Gastrocnemius medialis (tissue), 4 donors: ENCODE measurements at regions of chr1 and their contacts with region 1.

Region 1: GRCh38 chr1:169485544-169486278 is at the start of gene SLC19A2:
- DNase-seq: peak; percentile 100
- ATAC-seq: peak; percentile 72 to 75
- H3K4me3 ChIP-seq: peak within 1 kb of the TSS; percentile 75 to 94 (median 83)
- H3K27ac ChIP-seq: peak within 1 kb of the TSS; percentile 96 to 99 (median 98)
- H3K4me1 ChIP-seq: peaks cover 33 to 47% of the 10 kb centered on the region in 2 donors
- H3K27me3 ChIP-seq: no peaks in the 10 kb centered on the region
- CTCF ChIP-seq: peak in 2 of 5 experiments; percentile 36 to 44
- POLR2A ChIP-seq: peak; percentile 91 to 99
- total RNA-seq, gene SLC19A2: 93.3 to 176 (median 99.8) TPM

Region 2: GRCh38 chr1:167721617-167722151 is 1764.0 kb before region 1 on chr1 and contains the start of gene MPZL1:
- in situ Hi-C with region 1: no loop called
- intact Hi-C with region 1: loop called (anchors 5 kb)
- DNase-seq: peak; percentile 95
- ATAC-seq: peak; percentile 96 to 97
- H3K4me3 ChIP-seq: peak within 1 kb of the TSS; percentile 73 to 93 (median 90)
- H3K27ac ChIP-seq: peak within 1 kb of the TSS; percentile 79 to 92 (median 87)
- H3K4me1 ChIP-seq: peaks cover 23 to 34% of the 10 kb centered on the region in 2 donors
- H3K27me3 ChIP-seq: no peaks in the 10 kb centered on the region
- CTCF ChIP-seq: no peak
- POLR2A ChIP-seq: peak; percentile 76 to 80
- total RNA-seq, gene MPZL1: 9.2 to 15.7 (median 11.7) TPM

Region 3: DNA sequence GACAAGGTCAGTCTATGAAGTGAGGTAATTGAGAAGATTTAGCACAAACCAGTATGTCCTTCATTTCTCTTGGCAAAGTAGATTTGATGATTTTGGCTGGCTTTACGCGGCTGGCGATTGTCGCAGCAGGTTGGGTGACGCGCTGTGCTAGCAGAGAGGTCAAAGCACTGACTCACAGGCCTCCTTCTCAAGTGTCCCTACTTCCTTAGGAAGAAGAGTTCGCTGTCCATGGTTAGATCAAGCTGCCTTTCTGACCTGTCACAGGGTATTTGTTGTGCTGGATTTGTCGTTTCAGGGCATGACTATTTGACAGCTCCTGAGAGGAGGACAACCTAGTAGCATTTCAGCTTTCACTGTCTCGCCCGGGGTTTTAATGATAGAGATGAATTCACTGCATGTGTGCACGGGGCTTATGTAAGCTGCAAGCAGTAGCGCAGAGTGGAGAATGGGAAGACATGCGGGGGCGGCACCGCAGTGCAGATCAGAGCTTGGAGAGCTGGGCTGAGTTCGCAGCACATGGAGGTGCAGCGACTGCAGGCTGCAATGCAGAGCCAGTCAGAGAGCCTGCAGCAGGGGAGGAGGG is 876.5 kb before region 1 on chr1:
- in situ Hi-C with region 1: loop called in 2 of 4 experiments (anchors 10 to 25 kb)
- intact Hi-C with region 1: loop called (anchors 2 kb)
- DNase-seq: peak; percentile 86 to 91
- ATAC-seq: peak; percentile 79 to 80
- H3K4me3 ChIP-seq: peak overlapping the region; percentile 35 to 54 (median 46)
- H3K27ac ChIP-seq: peak overlapping the region; percentile 96 to 100 (median 96)
- H3K4me1 ChIP-seq: peaks cover 72 to 79% of the 10 kb centered on the region in 2 donors
- H3K27me3 ChIP-seq: no peaks in the 10 kb centered on the region
- CTCF ChIP-seq: no peak
- POLR2A ChIP-seq: peak; percentile 51 to 87

Region 4: DNA sequence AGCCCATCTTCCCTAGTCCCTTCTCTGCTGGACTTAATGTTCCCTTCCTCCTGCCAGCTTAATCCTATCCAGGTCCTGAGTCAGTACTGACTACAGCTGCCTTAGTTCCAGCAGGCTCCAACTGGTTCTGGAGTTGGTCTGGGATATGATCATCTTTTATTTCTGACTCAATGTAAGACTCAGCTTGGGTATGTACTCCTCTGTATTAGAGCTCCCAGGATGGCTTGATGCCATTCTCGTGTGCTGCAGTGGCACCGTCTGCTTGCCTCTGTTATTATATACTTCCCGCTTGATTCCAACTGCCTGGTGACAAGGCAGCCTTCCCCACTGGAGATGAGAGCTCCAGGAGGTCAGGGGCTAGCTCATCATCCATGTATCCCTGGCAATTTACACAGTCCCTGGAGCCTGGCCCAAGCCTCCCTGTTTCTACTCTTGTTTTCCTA is 592.3 kb before region 1 on chr1:
- in situ Hi-C with region 1: loop called in 1 of 4 experiments (anchors 10 kb)
- intact Hi-C with region 1: loop called (anchors 10 kb)
- DNase-seq: peak; percentile 74 to 88
- ATAC-seq: peak; percentile 98 to 99
- H3K4me3 ChIP-seq: peak overlapping the region in 2 of 4 donors; percentile 11 to 19
- H3K27ac ChIP-seq: peak overlapping the region; percentile 83 to 95 (median 88)
- H3K4me1 ChIP-seq: peaks cover 8 to 21% of the 10 kb centered on the region in 2 donors
- H3K27me3 ChIP-seq: no peaks in the 10 kb centered on the region
- CTCF ChIP-seq: no peak
- POLR2A ChIP-seq: peak; percentile 11 to 47

Region 5: GRCh38 chr1:169295425-169295824 is 190.3 kb before region 1 on chr1:
- in situ Hi-C with region 1: no loop called
- intact Hi-C with region 1: no loop called
- DNase-seq: no peak
- ATAC-seq: no peak
- H3K4me3 ChIP-seq: no peak overlapping the region
- H3K27ac ChIP-seq: no peak overlapping the region
- H3K4me1 ChIP-seq: no peaks in the 10 kb centered on the region
- H3K27me3 ChIP-seq: no peaks in the 10 kb centered on the region
- CTCF ChIP-seq: no peak
- POLR2A ChIP-seq: no peak

Region 6: GRCh38 chr1:169367486-169368405 is 118.0 kb before region 1 on chr1 and contains the starts of genes BLZF1 and NME7:
- in situ Hi-C with region 1: loop called in 1 of 4 experiments (anchors 10 kb)
- intact Hi-C with region 1: loop called (anchors 2 kb)
- DNase-seq: peak; percentile 93 to 94
- ATAC-seq: peak; percentile 99
- H3K4me3 ChIP-seq: peak within 1 kb of the TSS; percentile 66 to 90 (median 74)
- H3K27ac ChIP-seq: peak within 1 kb of the TSS; percentile 80 to 89 (median 86)
- H3K4me1 ChIP-seq: peaks cover 15 to 18% of the 10 kb centered on the region in 2 donors
- H3K27me3 ChIP-seq: no peaks in the 10 kb centered on the region
- CTCF ChIP-seq: no peak
- POLR2A ChIP-seq: peak; percentile 43
- total RNA-seq, gene BLZF1: 10.2 to 17.7 (median 14.6) TPM
- total RNA-seq, gene NME7: 3.7 to 8.4 (median 5.5) TPM

Region 7: DNA sequence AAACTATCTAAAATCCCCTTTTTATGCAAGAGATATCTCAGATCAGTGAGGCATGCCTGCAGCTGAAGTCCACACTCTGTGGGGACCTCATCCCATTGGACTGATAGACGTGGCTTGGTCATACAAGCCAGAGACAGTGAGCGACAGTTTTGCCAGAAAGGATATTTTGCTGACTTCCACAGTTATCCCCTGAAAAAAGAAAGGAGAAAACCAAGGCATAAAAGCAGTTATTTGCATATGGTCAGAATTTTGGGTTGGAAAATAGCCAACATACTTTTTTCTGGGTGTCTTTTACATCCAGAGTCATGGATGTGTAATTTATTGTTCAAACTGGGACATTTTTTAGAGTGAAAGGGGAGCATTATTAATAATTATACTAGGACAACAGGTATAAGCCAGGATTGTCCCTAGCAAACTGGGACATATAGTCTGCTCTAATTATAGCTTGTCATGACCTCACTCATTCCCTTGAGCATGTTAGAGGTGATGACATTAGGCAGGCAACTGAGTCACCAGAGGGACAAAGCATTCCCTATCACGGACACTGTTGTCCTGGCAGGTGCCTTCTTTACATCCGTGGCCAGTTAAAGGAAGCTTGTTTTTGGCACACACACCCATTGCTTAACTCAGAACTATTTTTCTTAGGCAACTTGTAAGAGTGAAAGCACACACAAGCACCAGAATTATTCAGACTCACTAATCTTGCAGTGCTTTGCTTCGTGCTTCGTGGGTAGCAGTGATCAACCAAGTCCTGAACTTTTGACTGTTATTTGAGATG is 1243.7 kb after region 1 on chr1:
- in situ Hi-C with region 1: loop called in 1 of 4 experiments (anchors 25 kb)
- intact Hi-C with region 1: loop called (anchors 10 kb)
- DNase-seq: peak; percentile 87 to 89
- ATAC-seq: peak; percentile 91 to 92
- H3K4me3 ChIP-seq: peak overlapping the region; percentile 21 to 37 (median 30)
- H3K27ac ChIP-seq: peak overlapping the region; percentile 85 to 95 (median 90)
- H3K4me1 ChIP-seq: peaks cover 63 to 69% of the 10 kb centered on the region in 2 donors
- H3K27me3 ChIP-seq: no peaks in the 10 kb centered on the region
- CTCF ChIP-seq: no peak
- POLR2A ChIP-seq: peak; percentile 25 to 65